Activated T-helper 1 cell treated with anti-CD3 and anti-CD28 coated beads, Interleukin-12 subunit alpha, Interleukin-12 subunit beta, Interleukin-2, Interleukin-4 antibody, amounts not matched to agents 30 ng/mL and 10 ng/mL and 1 ng/mL, durations not matched to agents 14 hours and 24 hours and 36 hours (primary cell): ENCODE measurements at regions of chrX and their contacts with region 1.

Region 1: GRCh38 chrX:31099536-31100090 is 27.8 kb upstream of the FTHL17 start:
- DNase-seq: peak; percentile 59
- H3K4me3 Mint-ChIP-seq: no peak overlapping the region
- H3K27ac Mint-ChIP-seq: peak overlapping the region; percentile 86
- H3K4me1 Mint-ChIP-seq: peaks cover 34% of the 10 kb centered on the region
- H3K27me3 Mint-ChIP-seq: no peaks in the 10 kb centered on the region

Region 2: GRCh38 chrX:30570505-30570904 is 529.1 kb before region 1 on chrX:
- intact Hi-C with region 1: loop called (anchors 10 kb)
- DNase-seq: no peak
- H3K4me3 Mint-ChIP-seq: no peak overlapping the region
- H3K27ac Mint-ChIP-seq: no peak overlapping the region
- H3K4me1 Mint-ChIP-seq: peaks cover 34% of the 10 kb centered on the region
- H3K27me3 Mint-ChIP-seq: no peaks in the 10 kb centered on the region

Region 3: GRCh38 chrX:30652527-30653414 is 446.8 kb before region 1 on chrX:
- intact Hi-C with region 1: loop called (anchors 10 kb)
- DNase-seq: peak; percentile 89
- H3K4me3 Mint-ChIP-seq: peak overlapping the region; percentile 95
- H3K27ac Mint-ChIP-seq: peak overlapping the region; percentile 97
- H3K4me1 Mint-ChIP-seq: peaks cover 49% of the 10 kb centered on the region
- H3K27me3 Mint-ChIP-seq: no peaks in the 10 kb centered on the region

Region 4: GRCh38 chrX:31136144-31136611 is 36.6 kb after region 1 on chrX:
- intact Hi-C with region 1: loop called (anchors 1 kb)
- DNase-seq: no peak
- H3K4me3 Mint-ChIP-seq: peak overlapping the region; percentile 48
- H3K27ac Mint-ChIP-seq: peak overlapping the region; percentile 79
- H3K4me1 Mint-ChIP-seq: peaks cover 23% of the 10 kb centered on the region
- H3K27me3 Mint-ChIP-seq: no peaks in the 10 kb centered on the region

Region 5: DNA sequence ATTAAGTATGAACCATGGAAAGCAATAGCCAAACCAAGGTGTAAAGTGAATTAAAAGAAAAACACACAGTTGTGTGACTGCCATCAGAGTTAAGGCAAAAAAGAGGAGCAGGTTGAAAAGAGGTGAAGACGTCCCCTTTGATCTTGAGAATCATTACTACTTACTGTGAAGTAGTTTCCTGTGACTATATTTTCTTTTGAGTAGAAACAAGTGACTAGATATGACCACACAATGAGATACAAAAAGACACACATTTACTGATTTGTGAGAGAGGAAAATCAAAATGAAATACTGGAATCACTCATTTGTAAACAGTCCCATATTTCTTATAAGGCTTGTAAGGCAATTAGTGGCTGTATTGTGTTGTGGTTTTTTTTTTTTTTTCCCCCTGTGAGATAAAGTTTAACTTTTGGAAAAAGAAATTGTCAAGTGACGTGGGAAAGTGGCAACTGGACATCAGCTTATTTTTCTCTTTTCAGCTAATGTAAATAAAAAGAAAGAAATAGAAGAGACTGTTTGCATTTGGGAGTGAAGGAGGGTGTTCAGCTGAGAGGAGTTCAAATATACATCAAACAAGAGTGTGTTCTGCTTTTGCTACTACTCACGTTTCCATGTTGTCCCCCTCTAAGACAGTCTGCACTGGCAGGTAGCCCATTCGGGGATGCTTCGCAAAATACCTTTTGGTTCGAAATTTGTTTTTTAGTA is 78.6 kb after region 1 on chrX:
- intact Hi-C with region 1: loop called (anchors 10 kb)
- DNase-seq: no peak
- H3K4me3 Mint-ChIP-seq: no peak overlapping the region
- H3K27ac Mint-ChIP-seq: peak overlapping the region; percentile 31
- H3K4me1 Mint-ChIP-seq: peaks cover 20% of the 10 kb centered on the region
- H3K27me3 Mint-ChIP-seq: peaks cover 2% of the 10 kb centered on the region